Activated CD4-positive, alpha-beta T cell treated with anti-CD3 and anti-CD28 coated beads for 36 hours (primary cell): ENCODE measurements at regions of chr19 and their contacts with region 1.

Region 1: DNA sequence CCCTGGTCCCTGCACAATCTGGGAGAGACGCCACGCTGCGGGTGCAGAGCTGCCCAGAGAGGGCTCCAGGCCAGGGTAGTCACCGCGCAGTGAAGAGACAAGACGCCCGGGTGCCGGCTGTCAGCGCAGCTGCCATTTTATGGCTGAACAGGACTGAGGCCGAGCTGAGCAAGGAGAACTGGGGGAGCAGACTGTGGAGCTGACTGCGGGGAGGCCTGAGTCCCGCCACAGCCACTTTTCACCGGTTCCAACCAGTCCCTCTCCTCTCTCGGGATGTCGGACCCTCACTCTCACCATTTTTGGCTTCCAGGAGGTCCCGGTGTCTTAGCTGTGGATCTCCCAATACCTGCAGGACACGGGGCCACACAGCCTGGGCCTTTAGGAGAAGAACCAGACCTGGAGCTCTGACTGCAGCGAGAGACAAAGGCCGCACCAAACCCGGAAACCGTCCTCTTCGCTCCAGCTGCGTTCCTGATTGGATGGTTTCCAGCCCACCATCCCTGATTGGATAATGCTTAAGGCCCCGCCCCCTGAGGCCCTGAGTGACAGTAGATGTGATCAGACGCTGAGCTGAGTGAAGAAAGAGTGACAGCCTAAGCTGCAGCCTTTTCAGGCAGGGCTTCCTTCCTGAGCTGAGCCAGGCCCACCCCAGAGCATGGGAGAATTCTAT is at the start of gene ZNF626:
- DNase-seq: peak; percentile 96
- ATAC-seq: peak; percentile 99
- H3K4me3 Mint-ChIP-seq: peak within 1 kb of the TSS; percentile 92
- H3K27ac Mint-ChIP-seq: peak within 1 kb of the TSS; percentile 95
- H3K4me1 Mint-ChIP-seq: peaks cover 33% of the 10 kb centered on the region
- H3K27me3 Mint-ChIP-seq: no peaks in the 10 kb centered on the region
- total RNA-seq, gene ZNF626: 8.0 to 13.3 TPM

Region 2: GRCh38 chr19:20565321-20566018 is 95.8 kb before region 1 on chr19 and contains the start of gene ZNF737:
- CTCF ChIA-PET with region 1: no interaction called
- POLR2A ChIA-PET with region 1: interaction called, 5 read pairs
- intact Hi-C with region 1: loop called (anchors 1 kb)
- DNase-seq: peak; percentile 97
- ATAC-seq: peak; percentile 97
- H3K4me3 Mint-ChIP-seq: peak within 1 kb of the TSS; percentile 98
- H3K27ac Mint-ChIP-seq: peak within 1 kb of the TSS; percentile 98
- H3K4me1 Mint-ChIP-seq: peaks cover 19% of the 10 kb centered on the region
- H3K27me3 Mint-ChIP-seq: no peaks in the 10 kb centered on the region
- total RNA-seq, gene ZNF737: 13.9 to 16.4 TPM

Region 3: DNA sequence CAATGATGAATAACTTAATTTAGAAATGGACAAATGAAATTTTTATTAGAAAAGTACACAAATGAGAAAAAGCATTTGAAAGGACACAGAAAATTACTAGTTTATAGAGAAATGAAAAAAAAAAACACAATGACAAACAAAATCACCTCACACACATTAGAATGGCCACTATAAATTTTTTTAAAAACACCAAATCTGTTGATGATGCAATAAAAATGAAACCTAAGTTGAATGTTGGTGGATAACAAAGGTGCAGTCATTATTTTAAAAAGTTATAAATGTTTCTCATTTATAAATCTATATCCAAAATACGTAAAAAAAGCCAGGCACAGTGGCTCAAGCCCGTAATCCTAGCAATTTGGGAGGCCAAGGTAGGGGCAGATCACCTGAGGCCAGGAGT is 20.7 kb before region 1 on chr19:
- CTCF ChIA-PET with region 1: no interaction called
- POLR2A ChIA-PET with region 1: no interaction called
- intact Hi-C with region 1: no loop called
- DNase-seq: no peak
- ATAC-seq: no peak
- H3K4me3 Mint-ChIP-seq: no peak overlapping the region
- H3K27ac Mint-ChIP-seq: no peak overlapping the region
- H3K4me1 Mint-ChIP-seq: no peaks in the 10 kb centered on the region
- H3K27me3 Mint-ChIP-seq: no peaks in the 10 kb centered on the region

Region 4: GRCh38 chr19:21082011-21082975 is 421.0 kb after region 1 on chr19 and contains the start of gene ZNF714:
- CTCF ChIA-PET with region 1: no interaction called
- POLR2A ChIA-PET with region 1: no interaction called
- intact Hi-C with region 1: loop called in 1 of 2 experiments (anchors 2 kb)
- DNase-seq: peak; percentile 89
- ATAC-seq: peak; percentile 98
- H3K4me3 Mint-ChIP-seq: peak within 1 kb of the TSS; percentile 99
- H3K27ac Mint-ChIP-seq: peak within 1 kb of the TSS; percentile 97
- H3K4me1 Mint-ChIP-seq: peaks cover 24% of the 10 kb centered on the region
- H3K27me3 Mint-ChIP-seq: no peaks in the 10 kb centered on the region
- total RNA-seq, gene ZNF714: 17.4 to 20.0 TPM

Region 5: GRCh38 chr19:21358768-21359451 is 697.6 kb after region 1 on chr19 and contains the start of gene ZNF738:
- CTCF ChIA-PET with region 1: no interaction called
- POLR2A ChIA-PET with region 1: no interaction called
- intact Hi-C with region 1: loop called in 1 of 2 experiments (anchors 1 kb)
- DNase-seq: peak; percentile 94
- ATAC-seq: peak; percentile 98
- H3K4me3 Mint-ChIP-seq: peak within 1 kb of the TSS; percentile 99
- H3K27ac Mint-ChIP-seq: peak within 1 kb of the TSS; percentile 99
- H3K4me1 Mint-ChIP-seq: peaks cover 10% of the 10 kb centered on the region
- H3K27me3 Mint-ChIP-seq: no peaks in the 10 kb centered on the region
- total RNA-seq, gene ZNF738: 15.8 to 19.5 TPM